ENCODE measurements at regions of chr3 and their contacts with region 1.

Region 1: GRCh38 chr3:157572559-157573270 is 69.5 kb upstream of the VEPH1 start:
- DNase-seq: peak; percentile 47
- ATAC-seq: peak; percentile 53
- H3K4me3 Mint-ChIP-seq: no peak overlapping the region
- H3K27ac Mint-ChIP-seq: no peak overlapping the region
- H3K4me1 Mint-ChIP-seq: peaks cover 2% of the 10 kb centered on the region
- H3K27me3 Mint-ChIP-seq: peaks cover 10% of the 10 kb centered on the region

Region 2: GRCh38 chr3:157447026-157447694 is 125.6 kb before region 1 on chr3:
- CTCF ChIA-PET with region 1: no interaction called
- DNase-seq: no peak
- ATAC-seq: no peak
- H3K4me3 Mint-ChIP-seq: no peak overlapping the region
- H3K27ac Mint-ChIP-seq: no peak overlapping the region
- H3K4me1 Mint-ChIP-seq: no peaks in the 10 kb centered on the region
- H3K27me3 Mint-ChIP-seq: peaks cover 6% of the 10 kb centered on the region

Region 3: DNA sequence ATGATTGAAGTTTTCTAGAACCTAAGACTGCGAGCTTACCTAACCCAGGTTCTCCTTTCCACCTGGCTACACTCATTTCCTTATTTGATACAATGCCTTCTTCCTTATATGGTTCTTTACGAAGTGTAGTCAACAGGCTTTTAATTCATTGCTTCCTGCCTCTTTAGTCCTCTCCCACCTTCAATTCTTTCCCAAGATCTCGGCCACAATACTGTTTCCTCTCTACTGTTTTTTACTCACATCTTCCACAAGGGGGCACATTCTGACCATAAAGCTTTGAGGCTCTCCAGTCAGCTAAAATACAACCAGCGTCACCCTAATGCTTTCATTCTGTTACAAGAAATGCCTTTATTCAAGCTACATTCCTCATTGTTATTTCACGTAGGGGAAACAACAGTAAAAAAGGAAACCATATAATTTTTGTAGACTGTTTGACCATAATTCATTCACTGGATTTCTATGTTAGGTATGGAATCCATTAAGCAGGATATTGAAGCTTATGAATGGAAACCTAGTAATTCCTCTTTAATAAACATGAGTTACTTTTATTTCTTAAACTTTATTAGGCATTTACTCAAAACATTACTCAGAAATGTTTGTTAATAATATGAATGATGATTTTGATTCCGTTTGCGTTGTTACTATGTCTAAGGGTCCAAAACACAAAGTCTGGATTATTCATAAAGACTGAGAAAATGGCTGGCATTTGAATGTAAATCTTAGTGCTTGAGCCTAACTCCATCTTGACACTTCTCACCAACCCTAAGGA is 40.0 kb before region 1 on chr3:
- CTCF ChIA-PET with region 1: interaction called, 75 read pairs
- DNase-seq: no peak
- ATAC-seq: peak; percentile 63
- H3K4me3 Mint-ChIP-seq: no peak overlapping the region
- H3K27ac Mint-ChIP-seq: no peak overlapping the region
- H3K4me1 Mint-ChIP-seq: no peaks in the 10 kb centered on the region
- H3K27me3 Mint-ChIP-seq: peaks cover 12% of the 10 kb centered on the region